Activated CD8-positive, alpha-beta T cell treated with anti-CD3 and anti-CD28 coated beads for 36 hours (primary cell): ENCODE measurements at regions of chr6 and their contacts with region 1.

Region 1: DNA sequence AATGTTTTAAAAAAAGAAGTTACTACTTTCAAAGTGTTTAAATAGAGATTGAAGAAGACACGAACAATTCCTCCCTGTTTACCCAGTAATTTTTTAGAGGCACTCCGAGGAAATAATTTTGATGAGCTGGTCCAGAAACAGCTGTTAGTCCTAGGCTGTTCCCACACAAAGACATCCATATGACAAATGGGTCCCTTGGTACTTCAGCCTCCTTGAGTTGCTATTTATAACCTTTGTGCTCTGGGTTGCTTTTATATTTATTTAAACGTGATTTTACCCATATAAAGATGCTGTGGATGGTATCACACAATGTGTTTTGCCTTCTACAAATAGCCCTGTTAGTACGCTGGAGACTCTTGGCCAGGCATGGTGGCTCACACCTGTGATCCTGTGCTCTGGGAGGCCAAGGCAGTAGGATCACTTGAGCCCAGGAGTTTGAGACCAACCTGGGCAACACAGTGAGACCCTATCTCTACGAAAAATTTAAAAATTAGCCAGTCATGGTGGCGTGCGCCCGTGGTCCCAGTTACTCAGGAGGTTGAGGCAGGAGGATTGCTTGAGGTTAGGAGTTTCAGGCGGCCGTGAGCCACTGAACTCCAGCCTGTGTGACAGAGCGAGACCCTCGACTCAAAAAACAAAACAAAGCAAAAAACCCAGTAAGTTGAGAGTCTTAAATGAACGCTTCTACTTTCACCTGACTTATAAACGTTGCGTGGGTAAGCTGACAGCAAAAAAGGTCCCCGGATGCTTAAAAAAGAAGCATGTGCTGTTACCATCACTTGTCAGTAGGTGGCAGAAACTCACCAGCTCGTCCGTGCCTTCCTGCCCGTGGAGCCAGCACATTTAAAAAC is 56.9 kb upstream of the ARMH2 start:
- DNase-seq: peak; percentile 83
- ATAC-seq: peak; percentile 68
- H3K4me3 Mint-ChIP-seq: peak overlapping the region; percentile 22
- H3K27ac Mint-ChIP-seq: peak overlapping the region; percentile 87
- H3K4me1 Mint-ChIP-seq: peaks cover 61% of the 10 kb centered on the region
- H3K27me3 Mint-ChIP-seq: no peaks in the 10 kb centered on the region
- CTCF ChIP-seq: peak; percentile 88

Region 2: DNA sequence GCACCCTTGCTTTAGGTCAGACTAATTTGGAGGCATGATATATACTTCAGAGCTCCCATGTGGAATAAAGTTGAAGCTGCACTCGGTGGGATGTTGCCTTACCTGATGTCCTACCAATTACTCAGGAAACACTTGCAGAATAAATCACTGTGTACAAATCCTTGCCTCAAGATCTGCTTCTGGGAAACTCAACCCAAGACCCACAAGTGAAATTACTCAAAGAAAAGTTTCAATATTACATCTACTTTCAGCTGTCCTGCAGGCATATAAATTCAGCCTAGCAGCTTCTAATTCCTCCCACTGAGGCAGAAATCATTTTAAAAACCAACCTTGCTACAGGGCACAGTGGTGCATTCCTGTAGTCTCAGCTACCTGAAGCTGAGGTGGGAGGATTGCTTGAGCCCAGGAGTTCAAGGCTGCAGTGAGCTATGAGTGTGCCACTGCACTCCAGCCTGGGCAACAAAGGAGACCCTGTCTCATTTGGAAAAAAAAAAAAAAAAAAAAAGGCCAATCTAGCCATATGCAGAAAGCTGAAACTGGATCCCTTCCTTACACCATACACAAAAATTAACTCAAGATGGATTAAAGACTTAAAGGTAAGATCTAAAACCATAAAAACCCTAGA is 477.0 kb before region 1 on chr6:
- CTCF ChIA-PET with region 1: no interaction called
- POLR2A ChIA-PET with region 1: no interaction called
- intact Hi-C with region 1: no loop called
- DNase-seq: no peak
- ATAC-seq: no peak
- H3K4me3 Mint-ChIP-seq: no peak overlapping the region
- H3K27ac Mint-ChIP-seq: no peak overlapping the region
- H3K4me1 Mint-ChIP-seq: no peaks in the 10 kb centered on the region
- H3K27me3 Mint-ChIP-seq: peaks cover 4% of the 10 kb centered on the region
- CTCF ChIP-seq: no peak

Region 3: DNA sequence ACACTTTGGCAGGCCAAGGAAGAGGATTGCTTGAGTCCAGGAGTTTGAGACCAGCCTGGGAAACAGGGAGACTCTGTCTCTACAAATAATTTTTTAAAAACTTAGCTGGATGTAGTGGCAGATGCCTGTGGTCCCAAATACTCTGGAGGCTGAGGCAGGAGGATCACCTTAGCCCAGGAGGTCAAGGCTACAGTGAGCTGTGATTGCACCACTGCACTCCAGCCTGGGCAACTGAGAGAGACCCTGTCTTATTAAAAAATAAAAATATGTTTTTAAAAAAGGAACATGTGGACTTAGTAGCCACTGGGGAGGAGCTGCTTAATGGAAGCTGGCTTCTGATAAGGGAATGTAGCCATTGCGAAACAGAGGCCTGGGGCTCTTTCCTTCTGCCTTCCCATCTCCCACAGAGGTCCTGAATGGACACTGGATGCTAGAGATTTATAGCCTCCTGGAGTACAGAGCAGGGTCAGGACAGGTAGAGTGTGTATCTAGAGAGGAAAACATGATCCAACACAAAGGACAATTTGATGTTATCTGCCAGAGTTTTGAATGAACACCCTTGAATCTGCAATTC is 102.6 kb before region 1 on chr6:
- CTCF ChIA-PET with region 1: no interaction called
- POLR2A ChIA-PET with region 1: no interaction called
- intact Hi-C with region 1: no loop called
- DNase-seq: no peak
- ATAC-seq: no peak
- H3K4me3 Mint-ChIP-seq: no peak overlapping the region
- H3K27ac Mint-ChIP-seq: no peak overlapping the region
- H3K4me1 Mint-ChIP-seq: no peaks in the 10 kb centered on the region
- H3K27me3 Mint-ChIP-seq: peaks cover 2% of the 10 kb centered on the region
- CTCF ChIP-seq: no peak

Region 4: GRCh38 chr6:24888715-24889370 is 33.2 kb after region 1 on chr6:
- CTCF ChIA-PET with region 1: interaction called, 24 read pairs
- POLR2A ChIA-PET with region 1: interaction called, 7 read pairs
- intact Hi-C with region 1: no loop called
- DNase-seq: no peak
- ATAC-seq: no peak
- H3K4me3 Mint-ChIP-seq: peak overlapping the region; percentile 18
- H3K27ac Mint-ChIP-seq: peak overlapping the region; percentile 88
- H3K4me1 Mint-ChIP-seq: peaks cover 83% of the 10 kb centered on the region
- H3K27me3 Mint-ChIP-seq: no peaks in the 10 kb centered on the region
- CTCF ChIP-seq: peak; percentile 27

Region 5: GRCh38 chr6:24910961-24911712 is 55.5 kb after region 1 on chr6:
- CTCF ChIA-PET with region 1: interaction called, 52 read pairs
- POLR2A ChIA-PET with region 1: interaction called, 28 read pairs
- intact Hi-C with region 1: no loop called
- DNase-seq: peak; percentile 64
- ATAC-seq: peak; percentile 18
- H3K4me3 Mint-ChIP-seq: peak overlapping the region; percentile 97
- H3K27ac Mint-ChIP-seq: peak overlapping the region; percentile 96
- H3K4me1 Mint-ChIP-seq: peaks cover 73% of the 10 kb centered on the region
- H3K27me3 Mint-ChIP-seq: no peaks in the 10 kb centered on the region
- CTCF ChIP-seq: no peak

Region 6: DNA sequence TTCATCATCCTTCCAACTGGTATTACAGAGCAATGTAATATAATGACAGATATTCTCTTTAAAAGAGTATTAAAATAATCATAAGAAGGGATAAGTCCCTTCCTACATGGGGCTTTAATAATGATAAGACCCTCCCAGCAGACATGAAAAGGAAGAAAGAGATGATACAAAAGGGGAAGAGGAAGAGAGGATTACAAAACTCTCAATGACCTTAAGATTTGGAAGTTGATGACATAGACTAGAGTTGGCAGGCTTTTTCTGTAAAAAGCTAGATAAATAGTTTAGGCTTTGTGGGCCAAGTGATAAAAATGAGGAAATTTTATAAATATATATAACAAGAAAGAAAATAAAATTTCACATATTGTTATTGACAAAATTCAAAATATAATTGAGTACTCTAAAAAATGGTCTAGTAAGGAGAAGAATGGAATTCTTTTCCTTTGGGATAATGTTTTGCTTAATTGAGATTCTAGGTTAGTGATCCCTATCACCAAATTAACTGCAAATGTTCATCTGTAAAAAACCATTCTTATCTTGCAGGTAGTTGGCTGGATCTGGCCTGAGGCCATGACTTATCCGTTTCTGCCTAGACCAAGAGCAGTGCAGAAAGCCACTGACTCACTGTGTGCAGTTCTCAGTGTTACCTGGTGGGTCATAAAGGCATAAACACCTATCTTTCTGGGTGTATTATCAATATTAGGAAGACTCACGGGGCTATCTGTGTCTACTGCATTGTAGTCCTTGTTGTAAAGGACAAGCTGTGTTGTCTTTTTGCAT is 69.1 kb after region 1 on chr6:
- CTCF ChIA-PET with region 1: interaction called, 22 read pairs
- POLR2A ChIA-PET with region 1: interaction called, 7 read pairs
- intact Hi-C with region 1: loop called (anchors 2 kb)
- DNase-seq: peak; percentile 75
- ATAC-seq: peak; percentile 61
- H3K4me3 Mint-ChIP-seq: peak overlapping the region; percentile 62
- H3K27ac Mint-ChIP-seq: peak overlapping the region; percentile 94
- H3K4me1 Mint-ChIP-seq: peaks cover 72% of the 10 kb centered on the region
- H3K27me3 Mint-ChIP-seq: peaks cover 4% of the 10 kb centered on the region
- CTCF ChIP-seq: no peak

Region 7: GRCh38 chr6:25006565-25007001 is 151.0 kb after region 1 on chr6:
- CTCF ChIA-PET with region 1: interaction called, 30 read pairs
- POLR2A ChIA-PET with region 1: interaction called, 5 read pairs
- intact Hi-C with region 1: no loop called
- DNase-seq: peak; percentile 75
- ATAC-seq: peak; percentile 72
- H3K4me3 Mint-ChIP-seq: peak overlapping the region; percentile 52
- H3K27ac Mint-ChIP-seq: peak overlapping the region; percentile 94
- H3K4me1 Mint-ChIP-seq: peaks cover 82% of the 10 kb centered on the region
- H3K27me3 Mint-ChIP-seq: no peaks in the 10 kb centered on the region
- CTCF ChIP-seq: no peak

Region 8: DNA sequence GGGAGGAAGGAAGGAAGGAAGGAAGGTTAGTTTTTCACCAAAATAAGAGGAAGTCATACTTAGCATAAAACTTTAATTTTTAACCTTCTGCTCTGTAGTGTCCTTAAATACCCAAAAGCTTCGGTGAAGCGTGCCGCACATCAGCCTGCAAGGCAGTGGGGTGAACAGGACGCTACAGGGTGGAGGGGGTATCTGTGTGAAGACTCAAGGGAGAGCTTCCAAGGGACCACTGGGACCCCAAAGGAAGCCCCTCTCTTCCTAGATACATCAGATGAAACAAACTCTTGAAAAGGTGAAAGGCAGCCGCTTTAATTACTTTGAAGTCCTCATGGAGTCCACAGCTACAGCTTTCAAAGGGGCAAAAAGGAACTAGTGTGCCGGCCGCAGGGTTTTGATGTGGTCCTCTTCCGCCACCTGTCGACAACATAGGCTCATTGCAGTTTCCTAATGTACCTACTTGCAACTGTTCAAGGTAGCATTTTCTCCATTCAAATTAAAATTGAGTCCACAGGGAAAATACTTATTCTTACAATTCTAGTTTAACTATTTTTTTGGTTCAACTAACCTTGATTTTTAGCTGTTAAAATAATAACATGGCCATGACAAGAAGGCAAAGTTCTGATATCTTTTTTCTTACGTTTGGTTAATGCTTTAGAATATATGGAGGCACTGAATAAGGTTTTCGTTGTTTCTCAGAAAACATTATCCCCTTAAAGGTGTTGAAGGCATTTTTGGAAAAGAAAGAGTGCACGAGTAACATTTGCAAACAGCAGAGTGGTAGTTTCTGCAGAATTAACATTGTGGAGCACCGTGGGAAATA is 215.1 kb after region 1 on chr6:
- CTCF ChIA-PET with region 1: interaction called, 10 read pairs
- POLR2A ChIA-PET with region 1: no interaction called
- intact Hi-C with region 1: loop called (anchors 5 kb)
- DNase-seq: peak; percentile 92
- ATAC-seq: peak; percentile 99
- H3K4me3 Mint-ChIP-seq: peak overlapping the region; percentile 68
- H3K27ac Mint-ChIP-seq: peak overlapping the region; percentile 94
- H3K4me1 Mint-ChIP-seq: peaks cover 6% of the 10 kb centered on the region
- H3K27me3 Mint-ChIP-seq: no peaks in the 10 kb centered on the region
- CTCF ChIP-seq: peak; percentile 87

Region 9: DNA sequence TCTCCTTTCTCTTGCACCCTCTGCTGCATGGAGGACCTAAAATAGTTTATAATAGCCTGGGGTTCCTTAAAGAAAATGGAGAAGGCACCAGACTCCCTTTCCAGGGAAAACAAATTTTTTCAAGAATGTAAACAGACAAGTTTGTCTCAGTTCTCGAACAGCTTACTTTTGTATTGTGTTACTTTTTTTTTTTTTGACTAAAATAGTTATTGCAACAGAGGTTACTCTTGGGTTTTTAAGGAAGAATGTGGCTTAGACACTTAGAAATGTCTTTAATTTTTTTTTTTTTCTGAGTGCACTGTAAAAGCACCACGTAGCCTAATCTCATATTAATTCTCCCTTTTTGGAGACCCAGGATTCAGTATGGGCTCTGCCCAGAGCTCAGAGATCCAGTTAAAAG is 274.9 kb after region 1 on chr6:
- CTCF ChIA-PET with region 1: no interaction called
- POLR2A ChIA-PET with region 1: no interaction called
- intact Hi-C with region 1: no loop called
- DNase-seq: no peak
- ATAC-seq: no peak
- H3K4me3 Mint-ChIP-seq: no peak overlapping the region
- H3K27ac Mint-ChIP-seq: no peak overlapping the region
- H3K4me1 Mint-ChIP-seq: peaks cover 45% of the 10 kb centered on the region
- H3K27me3 Mint-ChIP-seq: no peaks in the 10 kb centered on the region
- CTCF ChIP-seq: no peak